Activated B cell treated with CpG ODN at 0.5 μM for 24 hours (primary cell): ENCODE measurements at regions of chr12 and their contacts with region 1.

Region 1: GRCh38 chr12:47190271-47190750 is 110.6 kb upstream of the AMIGO2 start:
- DNase-seq: no peak
- ATAC-seq: peak; percentile 25
- H3K4me3 Mint-ChIP-seq: peak overlapping the region; percentile 45
- H3K27ac Mint-ChIP-seq: peak overlapping the region; percentile 86
- H3K4me1 Mint-ChIP-seq: peaks cover 75% of the 10 kb centered on the region
- H3K27me3 Mint-ChIP-seq: no peaks in the 10 kb centered on the region
- CTCF ChIP-seq: no peak

Region 2: GRCh38 chr12:46675736-46676135 is 514.6 kb before region 1 on chr12:
- CTCF ChIA-PET with region 1: no interaction called
- POLR2A ChIA-PET with region 1: no interaction called
- intact Hi-C with region 1: no loop called
- DNase-seq: no peak
- ATAC-seq: no peak
- H3K4me3 Mint-ChIP-seq: no peak overlapping the region
- H3K27ac Mint-ChIP-seq: no peak overlapping the region
- H3K4me1 Mint-ChIP-seq: no peaks in the 10 kb centered on the region
- H3K27me3 Mint-ChIP-seq: no peaks in the 10 kb centered on the region
- CTCF ChIP-seq: peak; percentile 31

Region 3: DNA sequence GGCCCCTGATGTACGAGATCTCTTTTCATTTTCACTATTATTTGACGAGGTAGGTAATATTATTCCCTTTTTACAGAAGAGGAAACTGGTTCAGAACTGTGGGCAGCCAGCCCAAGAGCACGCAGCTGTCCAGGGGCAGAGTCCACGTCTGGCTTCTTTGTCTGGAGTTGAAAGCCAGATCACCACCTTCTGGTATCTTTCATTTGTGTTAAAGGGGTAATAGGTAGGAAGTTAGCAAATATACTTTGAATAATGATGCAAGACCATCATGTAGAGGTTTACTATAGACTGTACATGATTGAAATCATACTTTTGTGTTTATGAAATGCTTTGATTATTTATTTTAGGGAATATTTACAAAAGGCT is 33.5 kb after region 1 on chr12:
- CTCF ChIA-PET with region 1: no interaction called
- POLR2A ChIA-PET with region 1: interaction called, 3 read pairs
- intact Hi-C with region 1: loop called (anchors 5 kb)
- DNase-seq: no peak
- ATAC-seq: peak; percentile 33
- H3K4me3 Mint-ChIP-seq: peak overlapping the region; percentile 74
- H3K27ac Mint-ChIP-seq: peak overlapping the region; percentile 88
- H3K4me1 Mint-ChIP-seq: peaks cover 85% of the 10 kb centered on the region
- H3K27me3 Mint-ChIP-seq: no peaks in the 10 kb centered on the region
- CTCF ChIP-seq: no peak

Region 4: DNA sequence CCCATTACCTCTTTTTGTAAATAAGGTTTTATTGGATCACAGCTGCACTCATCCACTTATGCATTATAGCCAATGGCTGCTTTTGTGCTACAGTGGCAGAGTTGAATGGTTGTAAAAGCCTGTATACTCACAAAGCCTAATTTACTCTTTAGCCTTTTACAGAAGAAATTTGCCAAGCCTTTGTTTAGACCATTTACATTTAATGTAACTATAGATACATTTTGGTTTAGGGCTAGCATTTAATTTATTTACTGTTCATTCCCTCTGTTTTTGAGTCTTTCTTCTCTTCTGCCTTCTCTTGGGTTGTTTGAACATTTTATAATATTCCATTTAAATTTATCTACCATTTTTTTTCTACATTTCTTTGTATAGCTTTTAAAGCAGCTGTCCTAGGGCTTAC is 106.5 kb after region 1 on chr12:
- CTCF ChIA-PET with region 1: no interaction called
- POLR2A ChIA-PET with region 1: no interaction called
- intact Hi-C with region 1: no loop called
- DNase-seq: no peak
- ATAC-seq: no peak
- H3K4me3 Mint-ChIP-seq: no peak overlapping the region
- H3K27ac Mint-ChIP-seq: no peak overlapping the region
- H3K4me1 Mint-ChIP-seq: peaks cover 18% of the 10 kb centered on the region
- H3K27me3 Mint-ChIP-seq: no peaks in the 10 kb centered on the region
- CTCF ChIP-seq: no peak